CD8-positive, alpha-beta T cell (primary cell): ENCODE measurements at regions of chr2 and their contacts with region 1.

Region 1: GRCh38 chr2:88451811-88452565 is 505 bp downstream of the FOXI3 start:
- DNase-seq: peak in 3 of 9 experiments; percentile 14 to 29 (median 24)
- ATAC-seq: peak; percentile 42
- H3K4me3 ChIP-seq: no peak overlapping the region
- H3K4me3 Mint-ChIP-seq: peak overlapping the region; percentile 79
- H3K27ac ChIP-seq: no peak overlapping the region
- H3K27ac Mint-ChIP-seq: no peak overlapping the region
- H3K4me1 ChIP-seq: peaks cover 6% of the 10 kb centered on the region
- H3K4me1 Mint-ChIP-seq: peaks cover 13% of the 10 kb centered on the region
- H3K27me3 ChIP-seq: peaks cover 30 to 33% of the 10 kb centered on the region in 2 experiments
- H3K27me3 Mint-ChIP-seq: peaks cover 59% of the 10 kb centered on the region
- CTCF ChIP-seq: no peak

Region 2: DNA sequence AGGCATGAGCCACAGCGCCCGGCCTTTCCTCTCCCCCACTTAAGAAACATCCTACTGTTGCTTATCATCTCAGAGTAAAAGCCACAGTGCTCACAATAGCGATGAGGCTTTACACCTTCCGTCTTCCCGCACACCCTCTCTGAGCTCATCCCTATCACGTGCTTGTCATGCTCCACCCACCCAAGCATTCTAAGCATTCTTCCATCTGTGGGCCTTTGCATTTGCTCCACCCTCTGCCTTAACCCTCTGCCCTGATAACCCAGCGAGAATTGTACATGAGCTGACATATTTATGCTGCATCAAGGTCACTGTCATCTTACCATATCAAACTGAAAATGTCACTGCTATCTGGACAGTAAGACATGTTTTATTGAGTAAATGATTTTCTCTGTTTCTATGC is 22.1 kb before region 1 on chr2:
- CTCF ChIA-PET with region 1: no interaction called
- POLR2A ChIA-PET with region 1: no interaction called
- intact Hi-C with region 1: no loop called
- DNase-seq: no peak
- ATAC-seq: no peak
- H3K4me3 ChIP-seq: no peak overlapping the region
- H3K4me3 Mint-ChIP-seq: no peak overlapping the region
- H3K27ac ChIP-seq: no peak overlapping the region
- H3K27ac Mint-ChIP-seq: no peak overlapping the region
- H3K4me1 ChIP-seq: no peaks in the 10 kb centered on the region
- H3K4me1 Mint-ChIP-seq: no peaks in the 10 kb centered on the region
- H3K27me3 ChIP-seq: no peaks in the 10 kb centered on the region
- H3K27me3 Mint-ChIP-seq: no peaks in the 10 kb centered on the region
- CTCF ChIP-seq: no peak

Region 3: GRCh38 chr2:88481691-88482338 is 29.8 kb after region 1 on chr2:
- CTCF ChIA-PET with region 1: no interaction called
- POLR2A ChIA-PET with region 1: no interaction called
- intact Hi-C with region 1: loop called in 1 of 2 experiments (anchors 2 kb)
- DNase-seq: no peak
- ATAC-seq: no peak
- H3K4me3 ChIP-seq: no peak overlapping the region
- H3K4me3 Mint-ChIP-seq: no peak overlapping the region
- H3K27ac ChIP-seq: no peak overlapping the region
- H3K27ac Mint-ChIP-seq: no peak overlapping the region
- H3K4me1 ChIP-seq: no peaks in the 10 kb centered on the region
- H3K4me1 Mint-ChIP-seq: no peaks in the 10 kb centered on the region
- H3K27me3 ChIP-seq: no peaks in the 10 kb centered on the region
- H3K27me3 Mint-ChIP-seq: peaks cover 6% of the 10 kb centered on the region
- CTCF ChIP-seq: no peak